Mammary epithelial cell (primary cell): ENCODE measurements at regions of chr3 and their contacts with region 1.

Region 1: GRCh38 chr3:9837701-9838582 is 5.9 kb downstream of the RPUSD3 start:
- DNase-seq: no peak
- H3K4me3 ChIP-seq: no peak overlapping the region
- H3K27ac ChIP-seq: no peak overlapping the region
- H3K4me1 ChIP-seq: peaks cover 2% of the 10 kb centered on the region
- H3K27me3 ChIP-seq: no peaks in the 10 kb centered on the region
- CTCF ChIP-seq: no peak

Region 2: GRCh38 chr3:9946112-9947024 is 108.4 kb after region 1 on chr3:
- CTCF ChIA-PET with region 1: no interaction called
- dilution Hi-C with region 1: no loop called
- in situ Hi-C with region 1: loop called in 1 of 2 experiments (anchors 10 kb)
- intact Hi-C with region 1: no loop called
- DNase-seq: peak; percentile 79
- H3K4me3 ChIP-seq: peak overlapping the region; percentile 43 to 56 (median 52)
- H3K27ac ChIP-seq: no peak overlapping the region
- H3K4me1 ChIP-seq: peaks cover 10% of the 10 kb centered on the region
- H3K27me3 ChIP-seq: no peaks in the 10 kb centered on the region
- CTCF ChIP-seq: peak; percentile 64 to 78

Region 3: GRCh38 chr3:10085736-10086135 is 247.8 kb after region 1 on chr3:
- CTCF ChIA-PET with region 1: no interaction called
- dilution Hi-C with region 1: no loop called
- in situ Hi-C with region 1: no loop called
- intact Hi-C with region 1: no loop called
- DNase-seq: peak; percentile 60
- H3K4me3 ChIP-seq: no peak overlapping the region
- H3K27ac ChIP-seq: no peak overlapping the region
- H3K4me1 ChIP-seq: peaks cover 8% of the 10 kb centered on the region
- H3K27me3 ChIP-seq: no peaks in the 10 kb centered on the region
- CTCF ChIP-seq: no peak